Activated CD8-positive, alpha-beta memory T cell treated with anti-CD3 and anti-CD28 coated beads, Interleukin-2, amount 10 ng/mL, durations not matched to agents 7 days and 5 days (primary cell): ENCODE measurements at regions of chr17 and their contacts with region 1.

Region 1: DNA sequence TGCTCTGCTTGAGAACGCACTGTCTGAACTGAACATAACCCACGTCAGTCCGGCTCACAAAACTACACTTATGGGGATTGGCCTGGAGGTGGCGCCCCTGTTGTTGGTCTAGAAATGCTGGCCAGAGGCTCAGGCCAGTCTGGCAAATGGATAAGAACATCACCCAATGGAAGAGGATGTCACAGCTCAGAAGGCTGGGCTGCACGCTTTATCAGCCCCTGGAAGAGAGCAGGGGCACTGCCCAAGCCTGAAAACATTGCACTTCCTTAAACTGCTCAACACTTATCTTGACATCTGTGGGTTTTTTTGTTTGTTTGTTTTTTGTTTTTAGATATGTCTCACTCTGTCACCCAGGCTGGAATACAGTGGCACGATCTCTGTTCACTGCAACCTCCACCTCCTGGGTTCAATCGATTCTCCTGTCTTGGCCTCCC is 24.8 kb upstream of the BPTF start:
- DNase-seq: peak; percentile 71
- ATAC-seq: peak; percentile 64
- H3K4me3 Mint-ChIP-seq: no peak overlapping the region
- H3K27ac Mint-ChIP-seq: no peak overlapping the region
- H3K4me1 Mint-ChIP-seq: peaks cover 8% of the 10 kb centered on the region
- H3K27me3 Mint-ChIP-seq: peaks cover 8% of the 10 kb centered on the region

Region 2: GRCh38 chr17:67509390-67510289 is 290.9 kb before region 1 on chr17:
- CTCF ChIA-PET with region 1: no interaction called
- DNase-seq: no peak
- ATAC-seq: peak; percentile 30
- H3K4me3 Mint-ChIP-seq: no peak overlapping the region
- H3K27ac Mint-ChIP-seq: no peak overlapping the region
- H3K4me1 Mint-ChIP-seq: peaks cover 12% of the 10 kb centered on the region
- H3K27me3 Mint-ChIP-seq: no peaks in the 10 kb centered on the region

Region 3: GRCh38 chr17:67824735-67825626 is 24.5 kb after region 1 on chr17 and contains the start of gene BPTF:
- CTCF ChIA-PET with region 1: interaction called, 10 read pairs
- DNase-seq: peak; percentile 94
- ATAC-seq: peak; percentile 87
- H3K4me3 Mint-ChIP-seq: peak within 1 kb of the TSS; percentile 96
- H3K27ac Mint-ChIP-seq: peak within 1 kb of the TSS; percentile 97
- H3K4me1 Mint-ChIP-seq: peaks cover 25% of the 10 kb centered on the region
- H3K27me3 Mint-ChIP-seq: peaks cover 16% of the 10 kb centered on the region
- total RNA-seq, gene BPTF: 89.3 to 101 TPM

Region 4: DNA sequence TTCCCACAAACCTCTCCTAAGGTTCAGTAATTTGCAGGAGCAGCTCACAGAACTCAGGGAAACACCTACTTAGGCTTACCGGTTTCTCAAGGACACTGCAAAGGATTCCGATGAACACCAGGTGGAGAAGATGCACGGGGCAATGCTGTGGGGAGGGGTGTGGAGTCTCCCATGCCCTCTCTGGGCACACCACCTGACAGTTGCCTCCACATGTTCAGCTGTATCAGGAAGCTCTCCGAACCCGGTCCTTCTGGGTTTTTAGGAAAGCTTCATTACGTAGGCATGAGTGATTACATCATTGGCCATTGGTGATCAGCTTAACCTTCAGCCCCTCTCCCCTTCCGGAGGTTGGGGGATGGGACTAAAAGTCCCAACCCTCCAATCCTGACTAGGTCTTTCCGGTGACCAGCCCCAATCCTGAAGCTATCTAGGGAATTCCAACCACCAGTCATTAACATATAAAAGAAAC is 174.1 kb after region 1 on chr17:
- CTCF ChIA-PET with region 1: no interaction called
- DNase-seq: no peak
- ATAC-seq: no peak
- H3K4me3 Mint-ChIP-seq: no peak overlapping the region
- H3K27ac Mint-ChIP-seq: no peak overlapping the region
- H3K4me1 Mint-ChIP-seq: no peaks in the 10 kb centered on the region
- H3K27me3 Mint-ChIP-seq: no peaks in the 10 kb centered on the region